ENCODE measurements at regions of chr12 and their contacts with region 1.

Region 1: GRCh38 chr12:45728630-45729232 is 775 bp upstream of the ARID2 start:
- DNase-seq: peak; percentile 96
- ATAC-seq: peak; percentile 76
- H3K4me3 ChIP-seq: peak overlapping the region; percentile 69
- H3K27ac ChIP-seq: peak overlapping the region; percentile 96
- H3K4me1 ChIP-seq: peaks cover 1% of the 10 kb centered on the region; the same call in 1 of the 2 replicates
- H3K27me3 ChIP-seq: no peaks in the 10 kb centered on the region
- CTCF ChIP-seq: peak; percentile 98
- POLR2A ChIP-seq: peak; percentile 95
- RAD21 ChIP-seq: peak; percentile 57

Region 2: GRCh38 chr12:45191239-45191638 is 537.5 kb before region 1 on chr12:
- CTCF ChIA-PET with region 1: no interaction called
- POLR2A ChIA-PET with region 1: no interaction called
- dilution Hi-C with region 1: no loop called
- in situ Hi-C with region 1: no loop called
- intact Hi-C with region 1: loop called (anchors 5 kb)
- DNase-seq: peak; percentile 49
- ATAC-seq: no peak
- H3K4me3 ChIP-seq: no peak overlapping the region
- H3K27ac ChIP-seq: no peak overlapping the region
- H3K4me1 ChIP-seq: no peaks in the 10 kb centered on the region; the same call in 1 of the 2 replicates
- H3K27me3 ChIP-seq: no peaks in the 10 kb centered on the region
- CTCF ChIP-seq: no peak
- POLR2A ChIP-seq: no peak
- RAD21 ChIP-seq: no peak

Region 3: DNA sequence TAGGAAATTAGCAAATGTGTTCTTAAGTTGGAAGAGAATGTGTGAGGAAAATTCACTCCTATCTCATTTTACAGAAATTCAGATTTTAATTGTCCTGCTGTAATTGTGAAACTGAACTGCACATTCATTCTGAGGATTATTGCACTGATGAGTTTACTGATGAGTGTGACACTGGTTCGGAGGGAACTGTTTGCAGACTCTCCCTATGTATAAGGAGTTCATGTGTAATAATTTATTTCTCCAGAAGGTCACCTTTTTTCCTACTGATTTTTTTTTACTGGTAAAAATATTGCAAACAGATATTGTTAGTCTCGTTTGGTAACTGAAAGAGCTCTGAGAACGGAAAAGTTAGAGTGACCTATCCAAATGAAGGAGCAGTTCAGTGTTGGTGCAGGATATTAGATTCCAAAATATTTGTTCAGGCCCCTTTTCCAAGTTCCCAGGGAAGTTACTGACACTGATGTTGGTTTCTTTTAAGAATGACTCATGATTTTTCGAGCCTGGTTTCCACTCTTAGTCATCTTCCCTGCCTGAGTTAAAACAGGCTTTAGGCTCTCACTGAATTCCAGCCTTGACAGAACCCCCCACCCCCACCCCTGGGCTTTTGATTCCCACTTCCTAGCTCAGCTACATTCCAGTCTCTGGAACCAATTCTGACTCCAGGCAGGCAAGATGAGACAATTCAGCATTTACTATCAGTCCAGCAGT is 494.4 kb before region 1 on chr12:
- CTCF ChIA-PET with region 1: no interaction called
- POLR2A ChIA-PET with region 1: no interaction called
- dilution Hi-C with region 1: no loop called
- in situ Hi-C with region 1: no loop called
- intact Hi-C with region 1: loop called (anchors 5 kb)
- DNase-seq: peak; percentile 98
- ATAC-seq: peak; percentile 82
- H3K4me3 ChIP-seq: no peak overlapping the region
- H3K27ac ChIP-seq: peak overlapping the region; percentile 24; the same call in 1 of the 2 replicates
- H3K4me1 ChIP-seq: peaks cover 19% of the 10 kb centered on the region
- H3K27me3 ChIP-seq: no peaks in the 10 kb centered on the region
- CTCF ChIP-seq: no peak
- POLR2A ChIP-seq: peak; percentile 25
- RAD21 ChIP-seq: peak; percentile 30; the same call in 1 of the 2 replicates

Region 4: GRCh38 chr12:45644541-45644940 is 84.2 kb before region 1 on chr12:
- CTCF ChIA-PET with region 1: no interaction called
- POLR2A ChIA-PET with region 1: no interaction called
- dilution Hi-C with region 1: no loop called
- in situ Hi-C with region 1: no loop called
- intact Hi-C with region 1: no loop called
- DNase-seq: peak; percentile 71
- ATAC-seq: peak; percentile 72
- H3K4me3 ChIP-seq: no peak overlapping the region
- H3K27ac ChIP-seq: no peak overlapping the region
- H3K4me1 ChIP-seq: no peaks in the 10 kb centered on the region
- H3K27me3 ChIP-seq: no peaks in the 10 kb centered on the region
- CTCF ChIP-seq: no peak
- POLR2A ChIP-seq: no peak
- RAD21 ChIP-seq: no peak

Region 5: GRCh38 chr12:45655201-45655600 is 73.5 kb before region 1 on chr12:
- CTCF ChIA-PET with region 1: no interaction called
- POLR2A ChIA-PET with region 1: no interaction called
- dilution Hi-C with region 1: no loop called
- in situ Hi-C with region 1: no loop called
- intact Hi-C with region 1: no loop called
- DNase-seq: peak; percentile 47
- ATAC-seq: peak; percentile 56; the same call in 1 of the 2 replicates
- H3K4me3 ChIP-seq: no peak overlapping the region
- H3K27ac ChIP-seq: no peak overlapping the region
- H3K4me1 ChIP-seq: no peaks in the 10 kb centered on the region
- H3K27me3 ChIP-seq: no peaks in the 10 kb centered on the region
- CTCF ChIP-seq: no peak
- POLR2A ChIP-seq: no peak
- RAD21 ChIP-seq: no peak

Region 6: GRCh38 chr12:45670346-45671065 is 58.2 kb before region 1 on chr12:
- CTCF ChIA-PET with region 1: no interaction called
- POLR2A ChIA-PET with region 1: no interaction called
- dilution Hi-C with region 1: no loop called
- in situ Hi-C with region 1: no loop called
- intact Hi-C with region 1: loop called (anchors 5 kb)
- DNase-seq: no peak
- ATAC-seq: no peak
- H3K4me3 ChIP-seq: no peak overlapping the region
- H3K27ac ChIP-seq: no peak overlapping the region
- H3K4me1 ChIP-seq: peaks cover 4% of the 10 kb centered on the region
- H3K27me3 ChIP-seq: no peaks in the 10 kb centered on the region
- CTCF ChIP-seq: no peak
- POLR2A ChIP-seq: no peak
- RAD21 ChIP-seq: no peak

Region 7: DNA sequence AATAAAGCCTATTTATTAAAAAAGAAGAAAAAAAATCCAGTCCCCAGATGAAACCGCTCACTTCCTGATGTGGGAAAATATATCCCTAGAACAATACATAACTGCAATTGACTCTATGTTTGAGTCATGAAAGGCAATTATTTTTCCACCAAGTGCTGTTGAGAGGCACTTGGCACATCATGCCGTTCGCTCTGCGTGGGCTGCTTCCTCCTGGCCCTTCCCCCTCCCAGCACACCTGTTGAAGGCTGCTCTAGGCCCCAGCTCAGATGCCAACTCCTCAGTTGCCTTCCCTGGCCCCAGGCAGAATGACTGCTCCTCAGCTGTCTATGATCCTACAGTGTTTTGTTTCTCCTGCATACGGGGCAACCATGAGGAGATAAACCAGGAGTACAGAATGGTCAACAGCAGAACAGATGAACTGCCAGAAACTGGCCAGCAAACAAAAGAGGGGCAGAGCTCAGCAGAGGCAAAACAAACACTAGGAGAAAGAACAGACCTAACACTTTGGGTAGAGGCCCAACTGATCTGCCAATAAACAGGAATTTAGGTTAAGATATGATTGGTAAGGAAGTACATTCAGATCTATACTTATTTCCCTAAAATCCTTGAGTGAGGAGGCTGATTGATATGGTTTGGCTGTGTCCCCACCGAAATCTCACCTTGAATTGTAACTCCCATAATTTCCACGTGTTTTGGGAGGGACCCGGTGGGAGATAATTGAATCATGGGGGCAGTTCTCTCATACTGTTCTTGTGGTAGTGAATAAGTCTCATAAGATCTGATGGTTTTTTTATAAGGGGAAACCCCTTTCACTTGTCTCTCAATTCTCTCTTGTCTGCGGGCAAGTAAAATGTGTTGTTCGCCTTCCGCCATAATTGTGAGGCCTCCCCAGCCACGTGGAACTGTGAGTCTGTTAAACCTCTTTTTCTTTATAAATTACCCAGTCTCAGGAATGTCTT is 481.5 kb after region 1 on chr12:
- CTCF ChIA-PET with region 1: no interaction called
- POLR2A ChIA-PET with region 1: no interaction called
- dilution Hi-C with region 1: no loop called
- in situ Hi-C with region 1: no loop called
- intact Hi-C with region 1: no loop called
- DNase-seq: no peak
- ATAC-seq: no peak
- H3K4me3 ChIP-seq: no peak overlapping the region
- H3K27ac ChIP-seq: no peak overlapping the region
- H3K4me1 ChIP-seq: peaks cover 8% of the 10 kb centered on the region
- H3K27me3 ChIP-seq: no peaks in the 10 kb centered on the region
- CTCF ChIP-seq: no peak
- POLR2A ChIP-seq: no peak
- RAD21 ChIP-seq: no peak